Sigmoid colon (tissue), 7 donors: ENCODE measurements at regions of chrX and their contacts with region 1.

Region 1: DNA sequence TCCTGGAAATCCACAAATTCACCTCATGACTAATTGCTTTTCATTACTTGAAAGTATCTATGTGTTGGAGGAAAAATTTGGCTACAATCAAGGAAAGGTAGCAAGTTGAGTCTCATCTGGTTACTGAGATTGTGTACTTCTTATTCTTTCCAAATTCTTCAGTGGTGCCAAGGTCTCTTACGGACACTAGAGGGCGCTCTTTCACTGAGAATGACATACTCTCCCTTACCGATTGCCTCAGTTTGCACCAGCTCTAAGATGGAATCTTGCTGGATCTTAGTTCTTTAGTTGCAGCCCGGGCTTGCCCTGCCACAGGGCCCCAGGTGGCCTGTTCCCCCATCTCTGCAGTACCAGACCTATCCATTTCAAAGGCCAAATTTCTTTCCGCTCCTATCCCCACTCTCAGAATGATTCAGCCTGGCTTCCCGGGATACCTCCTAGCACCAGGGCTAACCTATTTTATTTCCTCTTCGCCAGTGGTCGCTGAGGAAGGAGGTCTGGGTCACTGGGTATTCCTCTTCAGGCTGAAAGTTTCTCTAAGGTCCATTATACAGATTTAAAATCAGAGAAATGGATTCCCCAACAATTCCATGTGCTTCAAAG is 24.6 kb upstream of the GPR50 start:
- DNase-seq: no peak
- H3K4me3 ChIP-seq: no peak overlapping the region
- H3K27ac ChIP-seq: no peak overlapping the region
- H3K4me1 ChIP-seq: no peaks in the 10 kb centered on the region
- H3K27me3 ChIP-seq: peaks cover 0 to 4% (median 0%) of the 10 kb centered on the region in 3 donors
- CTCF ChIP-seq: peak; percentile 21 to 65 (median 49)
- EP300 ChIP-seq: no peak
- POLR2A ChIP-seq: no peak

Region 2: DNA sequence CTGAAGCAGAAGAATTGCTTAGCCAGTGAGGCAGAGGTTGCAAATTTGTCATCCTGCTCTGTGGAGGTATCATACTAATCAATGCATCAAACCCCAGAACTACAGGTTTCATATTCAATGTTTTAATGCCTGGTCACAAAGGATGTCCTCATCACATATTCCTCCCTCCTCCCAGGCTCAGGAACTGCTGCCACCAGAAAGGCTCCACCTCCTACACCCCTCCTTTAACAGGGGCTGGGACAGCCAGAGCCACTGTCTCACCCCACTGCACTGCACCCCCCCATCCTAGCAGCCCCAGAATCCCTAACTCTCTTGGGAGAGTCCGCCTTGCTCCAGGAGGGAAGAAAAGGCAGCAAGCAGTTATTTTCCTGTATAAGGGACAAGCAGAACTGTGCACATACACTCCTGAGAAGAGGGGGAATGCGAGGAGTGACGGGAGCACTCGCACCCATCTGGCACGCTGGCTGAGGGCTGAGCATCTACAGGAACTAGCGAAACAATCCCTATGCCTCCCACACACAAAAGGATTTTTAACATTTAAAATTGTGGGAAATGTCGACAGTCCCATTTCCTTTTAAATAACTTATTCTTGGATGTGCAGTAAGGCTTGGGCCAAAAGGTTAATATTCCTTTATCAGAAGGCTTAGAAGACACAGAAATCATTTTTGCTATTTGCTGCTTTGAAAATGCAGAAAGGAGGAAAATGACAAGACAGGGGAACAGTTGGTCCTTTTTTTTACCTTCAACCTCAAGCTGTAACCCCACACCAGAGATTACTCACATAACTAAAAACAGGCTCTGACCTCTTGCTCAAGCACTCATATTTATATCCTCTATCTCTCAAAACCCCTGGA is 281.1 kb before region 1 on chrX:
- intact Hi-C with region 1: no loop called
- DNase-seq: no peak
- H3K4me3 ChIP-seq: no peak overlapping the region
- H3K27ac ChIP-seq: peak overlapping the region; percentile 24 to 63 (median 56)
- H3K4me1 ChIP-seq: peaks cover 0 to 51% (median 33%) of the 10 kb centered on the region in 4 donors
- H3K27me3 ChIP-seq: no peaks in the 10 kb centered on the region
- CTCF ChIP-seq: no peak
- EP300 ChIP-seq: no peak
- POLR2A ChIP-seq: no peak

Region 3: GRCh38 chrX:151019856-151020255 is 131.9 kb before region 1 on chrX:
- intact Hi-C with region 1: no loop called
- DNase-seq: no peak
- H3K4me3 ChIP-seq: no peak overlapping the region
- H3K27ac ChIP-seq: no peak overlapping the region
- H3K4me1 ChIP-seq: no peaks in the 10 kb centered on the region
- H3K27me3 ChIP-seq: no peaks in the 10 kb centered on the region
- CTCF ChIP-seq: no peak
- EP300 ChIP-seq: no peak
- POLR2A ChIP-seq: no peak

Region 4: DNA sequence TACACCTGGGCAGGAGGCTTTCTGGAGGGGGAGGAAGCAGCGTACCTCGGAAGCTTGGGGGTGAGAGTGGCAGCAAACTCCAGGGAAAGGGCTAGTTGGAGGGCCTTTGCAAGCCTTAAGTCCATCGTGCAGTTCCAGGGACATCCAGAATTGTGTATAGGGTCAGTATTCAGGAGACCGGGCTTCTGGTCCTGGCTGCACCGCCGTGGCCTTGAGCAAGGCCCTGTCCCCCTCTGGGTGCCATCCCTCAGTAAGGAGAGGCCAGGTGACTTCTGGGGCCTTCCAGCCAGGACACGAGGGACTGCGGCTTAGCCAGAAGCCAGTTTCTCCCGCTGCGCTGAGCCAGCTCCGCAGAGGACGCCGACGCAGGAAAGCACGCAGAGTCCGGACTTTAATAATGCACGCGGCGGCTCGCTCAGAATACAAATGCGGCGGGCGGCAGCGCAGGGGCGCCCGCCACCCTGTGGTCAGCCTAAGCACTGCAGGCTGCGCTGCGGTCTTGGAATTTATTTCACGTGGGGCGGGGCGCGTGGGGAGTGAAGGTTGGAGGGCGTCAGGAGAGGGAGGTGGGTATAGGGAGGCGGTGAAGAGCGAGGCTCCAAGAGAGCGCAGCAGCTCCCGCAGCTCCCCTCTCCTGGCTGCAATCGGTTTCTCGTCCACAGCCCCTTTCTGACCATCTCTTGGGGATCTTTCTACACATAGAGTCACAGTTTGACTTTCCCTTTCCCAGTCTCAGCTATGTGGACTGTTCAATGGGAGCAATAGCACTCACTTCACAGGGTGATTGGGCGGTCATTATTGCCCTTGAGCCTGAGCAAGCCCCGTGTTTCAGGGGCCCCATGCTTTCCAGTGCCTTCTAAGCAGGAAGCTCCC is 69.5 kb before region 1 on chrX:
- intact Hi-C with region 1: no loop called
- DNase-seq: peak; percentile 72
- H3K4me3 ChIP-seq: peak overlapping the region in 2 of 4 donors; percentile 10 to 12
- H3K27ac ChIP-seq: no peak overlapping the region
- H3K4me1 ChIP-seq: peaks cover 0 to 6% (median 0%) of the 10 kb centered on the region in 4 donors
- H3K27me3 ChIP-seq: no peaks in the 10 kb centered on the region
- CTCF ChIP-seq: peak; percentile 57 to 88 (median 80)
- EP300 ChIP-seq: no peak
- POLR2A ChIP-seq: no peak

Region 5: DNA sequence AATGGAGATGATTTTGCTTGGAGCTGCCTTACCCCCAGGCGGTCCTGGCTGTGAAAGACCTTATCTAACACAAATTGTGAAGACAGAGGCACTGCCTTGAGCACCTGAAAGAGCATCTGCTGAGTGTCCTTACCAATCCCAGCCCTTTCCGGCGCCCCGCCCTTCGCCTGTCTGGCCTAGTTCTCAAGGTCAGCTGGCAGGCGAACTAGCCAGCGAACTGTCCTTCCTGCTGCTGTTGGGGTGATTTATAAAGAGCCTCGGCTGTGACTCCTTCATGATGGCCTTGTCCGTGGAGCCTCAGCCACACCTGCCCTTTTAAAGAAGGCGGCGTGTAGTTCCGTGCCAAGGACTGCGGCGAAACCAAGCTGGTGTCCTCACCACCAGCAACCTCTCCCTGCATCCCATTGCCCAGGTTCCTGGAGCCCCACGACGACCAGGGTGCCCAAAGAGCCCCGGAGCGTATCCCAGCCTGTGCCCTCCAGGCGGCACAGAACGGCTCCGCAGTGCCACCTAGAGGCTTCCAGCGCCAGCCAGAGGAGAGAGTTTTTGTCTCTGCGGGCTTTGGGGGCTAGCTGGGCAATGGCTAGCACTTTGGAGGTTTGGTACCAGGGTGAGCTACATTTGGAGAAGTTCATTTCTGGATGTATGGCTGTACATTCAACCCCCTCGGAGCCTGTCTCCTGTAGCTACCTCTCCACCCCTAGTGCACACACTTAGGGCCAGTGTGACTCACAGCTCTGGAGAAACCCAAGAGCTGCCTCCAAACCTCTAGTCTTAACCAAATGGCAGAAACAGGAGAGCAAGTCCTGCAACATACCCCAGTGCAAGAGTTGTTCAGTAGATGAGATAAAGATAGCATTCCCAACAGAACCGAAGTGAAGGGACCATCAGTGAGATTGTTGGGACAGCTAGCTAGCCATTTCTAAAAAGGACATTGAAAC is 208.4 kb after region 1 on chrX:
- intact Hi-C with region 1: loop called (anchors 10 kb)
- DNase-seq: no peak
- H3K4me3 ChIP-seq: no peak overlapping the region
- H3K27ac ChIP-seq: no peak overlapping the region
- H3K4me1 ChIP-seq: no peaks in the 10 kb centered on the region
- H3K27me3 ChIP-seq: no peaks in the 10 kb centered on the region
- CTCF ChIP-seq: peak in 1 of 4 experiments; percentile 52
- EP300 ChIP-seq: no peak
- POLR2A ChIP-seq: no peak

Region 6: GRCh38 chrX:151680805-151681204 is 529.0 kb after region 1 on chrX:
- intact Hi-C with region 1: loop called (anchors 1 kb)
- DNase-seq: no peak
- H3K4me3 ChIP-seq: no peak overlapping the region
- H3K27ac ChIP-seq: no peak overlapping the region
- H3K4me1 ChIP-seq: no peaks in the 10 kb centered on the region
- H3K27me3 ChIP-seq: peaks cover 0 to 4% (median 0%) of the 10 kb centered on the region in 3 donors
- CTCF ChIP-seq: peak; percentile 30 to 54 (median 44)
- EP300 ChIP-seq: no peak
- POLR2A ChIP-seq: no peak